ENCODE measurements at regions of chr17 and their contacts with region 1.

Region 1: DNA sequence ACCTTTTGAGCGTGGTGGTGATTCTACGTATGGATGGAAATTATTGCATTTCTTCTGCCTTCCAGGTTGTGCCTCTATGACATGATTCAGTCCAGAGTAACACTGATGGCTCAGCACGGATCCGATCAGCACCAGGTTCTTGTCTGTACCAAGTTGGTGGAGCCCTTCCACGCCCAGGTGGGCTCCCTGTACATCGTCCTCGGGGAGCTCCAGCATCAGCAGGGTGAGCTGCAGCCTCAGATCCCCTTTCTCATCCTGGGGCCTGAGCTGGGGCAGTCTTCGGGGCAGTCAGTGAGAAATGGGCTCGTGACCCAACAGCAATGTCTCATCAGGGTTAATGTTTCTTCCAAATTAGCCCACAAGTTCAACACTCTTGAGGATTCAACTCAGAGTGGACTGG is 9.3 kb upstream of the CDK3 start:
- DNase-seq: no peak
- H3K27ac ChIP-seq: no peak overlapping the region
- CTCF ChIP-seq: no peak

Region 2: DNA sequence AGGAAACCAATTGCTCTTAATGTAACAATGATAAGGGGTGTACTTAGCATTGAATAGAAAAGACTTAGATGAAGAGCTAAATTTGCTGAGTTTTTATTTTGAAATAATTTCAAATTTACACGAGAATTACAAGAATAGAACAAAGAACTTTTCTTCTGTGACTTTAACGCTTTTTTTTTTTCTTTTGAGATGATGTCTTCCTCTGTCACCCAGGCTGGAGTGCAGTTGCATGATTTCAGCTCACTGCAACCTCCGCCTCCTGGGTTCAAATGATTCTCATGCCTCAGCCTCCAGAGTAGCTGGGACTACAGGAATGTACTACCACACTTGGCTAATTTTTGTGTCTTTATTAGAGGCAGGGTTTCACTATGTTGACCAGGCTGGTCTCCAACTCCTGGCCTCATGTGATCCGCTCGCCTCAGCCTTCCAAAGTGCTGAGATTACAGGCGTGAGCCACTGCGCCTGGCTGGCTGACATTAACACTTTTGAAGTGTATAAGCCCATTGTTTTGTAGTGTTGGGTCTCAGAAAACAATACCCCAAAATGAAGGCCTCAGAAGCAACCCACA is 10.3 kb before region 1 on chr17:
- CTCF ChIA-PET with region 1: no interaction called
- POLR2A ChIA-PET with region 1: interaction called, 12 read pairs
- DNase-seq: no peak
- H3K27ac ChIP-seq: peak overlapping the region; percentile 26; the same call in 1 of the 2 replicates
- CTCF ChIP-seq: no peak